Ovary (tissue), 10 donors: ENCODE measurements at regions of chr10 and their contacts with region 1.

Region 1: GRCh38 chr10:102583435-102584417 is 60.6 kb upstream of the TRIM8 start:
- DNase-seq: peak; percentile 82 to 90 (median 87)
- H3K4me3 ChIP-seq: no peak overlapping the region
- H3K27ac ChIP-seq: no peak overlapping the region
- H3K4me1 ChIP-seq: peaks cover 8% of the 10 kb centered on the region
- H3K27me3 ChIP-seq: no peaks in the 10 kb centered on the region
- CTCF ChIP-seq: peak; percentile 73 to 83 (median 77)
- EP300 ChIP-seq: no peak
- POLR2A ChIP-seq: no peak

Region 2: DNA sequence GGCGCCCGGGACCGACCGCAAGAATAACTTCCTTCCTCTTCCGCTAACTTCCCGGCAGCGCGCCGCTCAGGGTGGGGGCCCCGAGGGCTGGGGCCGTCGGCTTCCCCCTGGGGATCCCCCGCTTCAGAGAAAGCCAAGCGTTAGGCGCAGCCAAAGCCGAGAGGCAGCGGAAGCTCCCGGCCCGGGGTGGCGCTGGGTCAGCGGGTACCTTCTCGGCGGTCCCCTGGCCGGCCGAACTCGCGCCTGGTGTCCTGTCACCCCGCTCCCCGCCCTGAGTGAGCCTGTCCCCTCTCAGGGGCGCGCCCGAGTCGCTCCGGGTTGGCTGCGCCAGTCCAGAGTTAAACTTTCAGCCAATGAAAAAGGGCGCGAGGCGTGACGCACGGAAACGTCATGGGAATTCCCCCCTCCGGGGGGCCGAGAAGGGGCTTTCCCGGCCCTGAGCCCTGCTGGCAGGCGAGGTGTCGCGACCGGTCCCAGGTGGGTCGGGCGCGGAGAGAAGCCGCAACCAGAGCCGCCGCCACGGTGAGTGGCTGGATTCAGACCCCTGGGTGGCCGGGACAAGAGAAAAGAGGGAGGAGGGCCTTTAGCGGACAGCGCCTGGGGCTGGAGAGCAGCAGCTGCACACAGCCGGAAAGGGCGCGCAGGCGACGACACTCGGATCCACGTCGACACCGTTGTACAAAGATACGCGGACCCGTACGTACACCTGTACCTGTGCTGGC is 189.5 kb before region 1 on chr10:
- intact Hi-C with region 1: loop called in 2 of 4 experiments (anchors 5 to 10 kb)
- DNase-seq: peak; percentile 92 to 96 (median 94)
- H3K4me3 ChIP-seq: peak overlapping the region; percentile 75
- H3K27ac ChIP-seq: peak overlapping the region; percentile 92 to 97
- H3K4me1 ChIP-seq: peaks cover 6% of the 10 kb centered on the region
- H3K27me3 ChIP-seq: no peaks in the 10 kb centered on the region
- CTCF ChIP-seq: peak; percentile 96 to 99 (median 99)
- EP300 ChIP-seq: peak; percentile 71
- POLR2A ChIP-seq: peak; percentile 86

Region 3: DNA sequence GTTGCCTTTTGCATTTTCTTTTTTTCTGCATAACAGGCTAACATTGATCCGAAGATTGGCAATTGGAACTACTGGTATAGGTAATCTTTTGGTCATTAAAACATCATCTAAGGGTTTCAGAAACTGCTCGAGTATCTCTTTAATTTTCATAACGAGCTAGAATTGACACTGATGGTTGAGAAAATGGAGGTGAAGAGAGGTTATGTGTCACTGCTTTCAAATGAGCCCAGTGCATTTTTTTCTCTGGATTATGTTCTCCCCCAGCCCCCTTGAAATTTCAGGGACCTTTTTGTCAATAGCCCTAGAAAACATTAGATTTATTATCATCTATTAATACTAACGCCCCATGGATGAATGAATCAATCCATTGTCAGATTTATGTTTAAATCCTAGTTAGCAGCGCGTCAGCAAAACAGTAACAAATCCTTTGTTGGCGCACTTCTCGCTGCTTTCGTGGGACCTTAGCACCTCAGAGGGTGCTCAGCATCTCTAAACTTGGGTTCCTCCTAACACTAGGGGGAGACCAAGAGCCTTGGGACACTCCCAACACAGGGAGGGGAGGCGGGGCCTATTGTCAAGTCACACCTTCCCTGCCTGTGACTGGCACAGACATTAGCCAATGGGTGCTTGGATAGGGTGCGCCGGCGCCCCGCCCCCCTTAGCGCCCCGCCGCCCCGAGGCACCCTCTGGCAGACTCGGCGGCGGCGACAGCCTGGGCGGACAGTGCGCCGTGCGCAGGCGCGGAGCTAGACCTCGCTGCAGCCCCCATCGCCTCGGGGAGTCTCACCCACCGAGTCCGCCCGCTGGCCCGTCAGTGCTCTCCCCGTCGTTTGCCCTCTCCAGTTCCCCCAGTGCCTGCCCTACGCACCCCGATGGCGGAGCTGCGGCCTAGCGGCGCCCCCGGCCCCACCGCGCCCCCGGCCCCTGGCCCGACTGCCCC is 80.2 kb before region 1 on chr10 and contains the start of gene SUFU:
- intact Hi-C with region 1: loop called in 3 of 4 experiments (anchors 5 to 10 kb)
- DNase-seq: peak; percentile 98 to 99 (median 98)
- H3K4me3 ChIP-seq: peak within 1 kb of the TSS; percentile 97
- H3K27ac ChIP-seq: peak within 1 kb of the TSS; percentile 8 to 68
- H3K4me1 ChIP-seq: peaks cover 5% of the 10 kb centered on the region
- H3K27me3 ChIP-seq: no peaks in the 10 kb centered on the region
- CTCF ChIP-seq: peak; percentile 82 to 97 (median 95)
- EP300 ChIP-seq: no peak
- POLR2A ChIP-seq: no peak
- total RNA-seq, gene SUFU: 4.6 to 19.1 (median 16.1) TPM

Region 4: GRCh38 chr10:102509387-102509786 is 74.3 kb before region 1 on chr10:
- intact Hi-C with region 1: loop called in 3 of 4 experiments (anchors 5 to 10 kb)
- DNase-seq: no peak
- H3K4me3 ChIP-seq: no peak overlapping the region
- H3K27ac ChIP-seq: no peak overlapping the region
- H3K4me1 ChIP-seq: peaks cover 2% of the 10 kb centered on the region
- H3K27me3 ChIP-seq: no peaks in the 10 kb centered on the region
- CTCF ChIP-seq: no peak
- EP300 ChIP-seq: no peak
- POLR2A ChIP-seq: no peak

Region 5: GRCh38 chr10:102678842-102679289 is 95.1 kb after region 1 on chr10:
- intact Hi-C with region 1: no loop called
- DNase-seq: peak; percentile 70 to 82 (median 74)
- H3K4me3 ChIP-seq: no peak overlapping the region
- H3K27ac ChIP-seq: peak overlapping the region in 1 of 2 donors; percentile 32
- H3K4me1 ChIP-seq: peaks cover 30% of the 10 kb centered on the region
- H3K27me3 ChIP-seq: no peaks in the 10 kb centered on the region
- CTCF ChIP-seq: peak; percentile 11 to 64 (median 43)
- EP300 ChIP-seq: no peak
- POLR2A ChIP-seq: no peak